ENCODE measurements at regions of chr3 and their contacts with region 1.

Region 1: DNA sequence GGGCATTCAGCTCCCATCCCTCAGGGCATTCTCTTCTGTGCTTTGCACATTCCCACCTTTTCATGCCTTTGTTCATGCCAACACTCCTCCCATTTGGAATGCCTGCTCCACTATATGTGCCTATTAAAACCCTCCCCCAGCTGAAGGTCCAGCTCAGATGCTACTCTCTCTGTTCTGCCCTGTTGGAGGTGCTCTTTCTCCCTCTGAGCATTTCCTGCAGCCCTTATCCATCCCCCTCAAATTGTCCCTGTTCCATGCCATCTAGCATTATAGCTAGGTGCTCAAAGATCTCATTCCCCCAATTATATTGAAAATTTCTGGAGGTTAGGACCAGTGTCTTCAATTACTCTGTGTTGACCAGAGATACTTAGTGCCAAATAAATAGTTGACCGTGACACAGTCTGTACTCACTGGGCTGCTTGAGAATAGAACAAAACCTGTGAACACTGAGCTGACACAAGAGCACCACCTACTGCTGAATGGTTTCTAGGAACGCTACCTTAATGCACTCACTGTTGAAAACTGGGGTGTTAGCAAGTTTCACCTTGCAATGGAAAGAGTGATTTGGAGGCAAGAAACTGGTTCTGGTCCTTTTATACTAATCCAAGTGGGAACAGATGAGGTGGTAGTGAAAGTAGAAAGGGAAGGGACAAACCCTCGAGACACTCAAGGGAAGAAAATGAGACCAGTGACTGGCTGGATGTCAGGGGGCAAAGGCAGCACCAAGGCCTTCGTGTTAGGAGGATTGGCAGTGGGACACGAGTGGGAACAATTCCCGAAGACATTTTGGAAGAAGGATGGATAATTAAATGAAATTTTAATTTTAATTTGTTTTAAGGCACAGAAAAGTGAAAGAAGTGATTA is 289.8 kb upstream of the ROPN1 start:
- DNase-seq: no peak
- ATAC-seq: peak; percentile 22 to 68 (median 64)
- H3K4me3 ChIP-seq: no peak overlapping the region
- H3K27ac ChIP-seq: peak overlapping the region in 4 of 12 donors; percentile 6 to 80 (median 20)
- H3K4me1 ChIP-seq: peaks cover 8 to 65% (median 36%) of the 10 kb centered on the region in 12 donors
- H3K27me3 ChIP-seq: no peaks in the 10 kb centered on the region
- CTCF ChIP-seq: peak; percentile 47 to 81 (median 68)
- POLR2A ChIP-seq: no peak

Region 2: GRCh38 chr3:124014366-124014942 is 267.2 kb before region 1 on chr3:
- intact Hi-C with region 1: loop called in 9 of 10 experiments (anchors 1 to 5 kb)
- DNase-seq: no peak
- ATAC-seq: peak in 1 of 4 donors; percentile 22
- H3K4me3 ChIP-seq: no peak overlapping the region
- H3K27ac ChIP-seq: no peak overlapping the region
- H3K4me1 ChIP-seq: peaks cover 0 to 15% (median 0%) of the 10 kb centered on the region in 12 donors
- H3K27me3 ChIP-seq: no peaks in the 10 kb centered on the region
- CTCF ChIP-seq: no peak
- POLR2A ChIP-seq: no peak

Region 3: GRCh38 chr3:124078953-124079911 is 202.5 kb before region 1 on chr3:
- intact Hi-C with region 1: loop called (anchors 2 to 5 kb)
- DNase-seq: no peak
- ATAC-seq: peak in 2 of 4 donors; percentile 53 to 59
- H3K4me3 ChIP-seq: no peak overlapping the region
- H3K27ac ChIP-seq: peak overlapping the region in 4 of 12 donors; percentile 13 to 43 (median 28)
- H3K4me1 ChIP-seq: peaks cover 0 to 58% (median 30%) of the 10 kb centered on the region in 12 donors
- H3K27me3 ChIP-seq: no peaks in the 10 kb centered on the region
- CTCF ChIP-seq: peak; percentile 65 to 88 (median 82)
- POLR2A ChIP-seq: no peak

Region 4: GRCh38 chr3:124158369-124158881 is 123.3 kb before region 1 on chr3:
- intact Hi-C with region 1: loop called in 1 of 10 experiments (anchors 5 kb)
- DNase-seq: no peak
- ATAC-seq: no peak
- H3K4me3 ChIP-seq: no peak overlapping the region
- H3K27ac ChIP-seq: no peak overlapping the region
- H3K4me1 ChIP-seq: peaks cover 7 to 40% (median 19%) of the 10 kb centered on the region in 12 donors
- H3K27me3 ChIP-seq: no peaks in the 10 kb centered on the region
- CTCF ChIP-seq: no peak
- POLR2A ChIP-seq: no peak

Region 5: GRCh38 chr3:124221422-124221821 is 60.3 kb before region 1 on chr3:
- intact Hi-C with region 1: no loop called
- DNase-seq: no peak
- ATAC-seq: no peak
- H3K4me3 ChIP-seq: no peak overlapping the region
- H3K27ac ChIP-seq: no peak overlapping the region
- H3K4me1 ChIP-seq: no peaks in the 10 kb centered on the region
- H3K27me3 ChIP-seq: no peaks in the 10 kb centered on the region
- CTCF ChIP-seq: no peak
- POLR2A ChIP-seq: no peak

Region 6: GRCh38 chr3:124246949-124247348 is 34.7 kb before region 1 on chr3:
- intact Hi-C with region 1: loop called in 3 of 10 experiments (anchors 1 to 2 kb)
- DNase-seq: no peak
- ATAC-seq: no peak
- H3K4me3 ChIP-seq: no peak overlapping the region
- H3K27ac ChIP-seq: peak overlapping the region in 7 of 12 donors; percentile 13 to 95 (median 88)
- H3K4me1 ChIP-seq: peaks cover 10 to 52% (median 35%) of the 10 kb centered on the region in 12 donors
- H3K27me3 ChIP-seq: no peaks in the 10 kb centered on the region
- CTCF ChIP-seq: peak in 10 of 12 donors; percentile 16 to 61 (median 36)
- POLR2A ChIP-seq: no peak

Measured in heart left ventricle (tissue), 16 donors.